ENCODE measurements at regions of chr16 and their contacts with region 1.

Region 1: DNA sequence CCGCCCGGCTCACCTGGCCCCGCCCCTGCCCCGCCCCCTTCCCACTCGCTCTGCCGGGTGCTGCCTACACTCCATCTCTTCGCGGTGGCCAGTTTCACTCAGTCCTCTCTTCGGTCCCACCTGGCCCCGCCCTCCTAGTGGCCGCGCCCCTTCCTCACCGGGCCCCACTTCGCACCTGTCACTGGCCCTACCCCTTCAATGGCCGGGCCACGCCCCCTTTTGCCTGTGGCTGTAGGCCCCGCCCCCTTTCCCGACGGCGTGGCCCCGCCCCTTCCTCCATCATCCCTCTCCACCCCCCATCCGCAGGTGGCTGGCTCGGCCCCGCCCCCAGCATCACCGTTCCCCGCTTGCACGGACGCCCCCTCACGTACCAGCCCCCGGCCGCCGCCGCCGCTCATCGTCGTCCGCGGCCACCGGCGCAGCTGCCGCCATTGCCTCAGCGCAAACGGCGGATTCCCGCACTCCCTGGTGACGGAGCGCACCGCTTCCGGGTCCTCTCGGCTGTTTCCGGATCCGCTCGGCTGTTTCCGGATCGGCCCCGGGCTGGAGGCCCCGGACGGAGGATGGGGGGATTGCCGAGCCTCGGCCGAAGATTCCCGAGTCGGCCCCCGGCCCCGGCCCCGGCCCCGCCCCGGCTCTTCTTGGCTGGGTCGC is at the start of gene RABEP2:
- DNase-seq: peak; percentile 99
- ATAC-seq: peak; percentile 64
- H3K4me3 Mint-ChIP-seq: peak within 1 kb of the TSS; percentile 90
- H3K27ac Mint-ChIP-seq: peak within 1 kb of the TSS; percentile 96
- H3K4me1 Mint-ChIP-seq: peaks cover 54% of the 10 kb centered on the region
- H3K27me3 Mint-ChIP-seq: no peaks in the 10 kb centered on the region
- CTCF ChIP-seq: no peak
- total RNA-seq, gene RABEP2: 93.5 and 110 TPM in 2 replicates

Region 2: GRCh38 chr16:28136751-28137434 is 788.0 kb before region 1 on chr16:
- CTCF ChIA-PET with region 1: no interaction called
- POLR2A ChIA-PET with region 1: no interaction called
- intact Hi-C with region 1: no loop called
- DNase-seq: no peak
- ATAC-seq: no peak
- H3K4me3 Mint-ChIP-seq: no peak overlapping the region
- H3K27ac Mint-ChIP-seq: peak overlapping the region; percentile 59
- H3K4me1 Mint-ChIP-seq: peaks cover 53% of the 10 kb centered on the region
- H3K27me3 Mint-ChIP-seq: no peaks in the 10 kb centered on the region
- CTCF ChIP-seq: no peak

Region 3: DNA sequence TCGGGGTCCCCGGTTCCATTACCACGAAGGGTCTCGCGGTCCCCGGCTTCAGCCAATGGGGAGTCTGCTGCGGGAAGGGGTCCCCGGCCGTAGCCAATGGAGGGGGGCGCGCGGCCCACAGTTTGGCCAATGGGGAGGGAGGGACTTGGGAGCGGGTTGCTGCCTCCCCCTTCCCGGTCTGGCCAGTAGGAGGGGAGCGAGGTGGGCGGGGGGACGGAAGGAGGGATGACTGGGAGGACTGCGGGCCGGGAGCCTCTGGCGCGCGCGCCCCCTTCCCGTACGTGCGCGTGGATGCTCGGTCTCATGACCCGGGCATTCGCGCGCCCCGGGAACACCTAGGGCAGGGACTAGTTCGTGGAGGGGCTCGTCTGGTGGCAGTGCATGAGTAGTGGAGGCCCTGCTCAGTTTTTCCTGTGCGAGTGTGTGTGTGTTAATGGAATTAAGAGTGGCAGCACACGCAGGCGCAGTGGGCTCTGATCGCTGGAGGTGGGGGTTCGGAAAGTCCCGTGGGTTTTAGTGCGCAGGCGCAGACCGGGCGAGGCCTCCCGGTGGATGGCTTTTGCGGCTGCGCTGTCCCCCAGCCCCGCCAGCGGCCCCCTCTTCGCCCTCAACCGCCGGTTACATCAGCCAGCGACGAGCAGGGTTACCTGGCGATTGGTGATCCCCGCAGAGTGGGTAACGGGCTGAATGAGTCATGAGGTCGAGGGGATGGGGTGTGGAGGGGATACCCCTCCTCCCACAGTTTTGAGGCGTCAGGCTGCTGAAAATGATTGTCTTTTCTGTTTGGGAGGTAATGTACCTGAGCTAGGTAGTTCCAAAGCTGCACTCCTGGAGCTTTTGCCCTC is 100.8 kb before region 1 on chr16:
- CTCF ChIA-PET with region 1: interaction called, 4 read pairs
- POLR2A ChIA-PET with region 1: interaction called, 49 read pairs
- intact Hi-C with region 1: loop called (anchors 1 kb)
- DNase-seq: peak; percentile 92
- ATAC-seq: peak; percentile 77
- H3K4me3 Mint-ChIP-seq: peak overlapping the region; percentile 98
- H3K27ac Mint-ChIP-seq: peak overlapping the region; percentile 99
- H3K4me1 Mint-ChIP-seq: peaks cover 43% of the 10 kb centered on the region
- H3K27me3 Mint-ChIP-seq: no peaks in the 10 kb centered on the region
- CTCF ChIP-seq: no peak

Region 4: GRCh38 chr16:28873536-28874201 is 51.2 kb before region 1 on chr16:
- CTCF ChIA-PET with region 1: interaction called, 10 read pairs
- POLR2A ChIA-PET with region 1: interaction called, 22 read pairs
- intact Hi-C with region 1: loop called (anchors 2 kb)
- DNase-seq: peak; percentile 53
- ATAC-seq: peak; percentile 92
- H3K4me3 Mint-ChIP-seq: no peak overlapping the region
- H3K27ac Mint-ChIP-seq: no peak overlapping the region
- H3K4me1 Mint-ChIP-seq: peaks cover 2% of the 10 kb centered on the region
- H3K27me3 Mint-ChIP-seq: no peaks in the 10 kb centered on the region
- CTCF ChIP-seq: no peak

Region 5: DNA sequence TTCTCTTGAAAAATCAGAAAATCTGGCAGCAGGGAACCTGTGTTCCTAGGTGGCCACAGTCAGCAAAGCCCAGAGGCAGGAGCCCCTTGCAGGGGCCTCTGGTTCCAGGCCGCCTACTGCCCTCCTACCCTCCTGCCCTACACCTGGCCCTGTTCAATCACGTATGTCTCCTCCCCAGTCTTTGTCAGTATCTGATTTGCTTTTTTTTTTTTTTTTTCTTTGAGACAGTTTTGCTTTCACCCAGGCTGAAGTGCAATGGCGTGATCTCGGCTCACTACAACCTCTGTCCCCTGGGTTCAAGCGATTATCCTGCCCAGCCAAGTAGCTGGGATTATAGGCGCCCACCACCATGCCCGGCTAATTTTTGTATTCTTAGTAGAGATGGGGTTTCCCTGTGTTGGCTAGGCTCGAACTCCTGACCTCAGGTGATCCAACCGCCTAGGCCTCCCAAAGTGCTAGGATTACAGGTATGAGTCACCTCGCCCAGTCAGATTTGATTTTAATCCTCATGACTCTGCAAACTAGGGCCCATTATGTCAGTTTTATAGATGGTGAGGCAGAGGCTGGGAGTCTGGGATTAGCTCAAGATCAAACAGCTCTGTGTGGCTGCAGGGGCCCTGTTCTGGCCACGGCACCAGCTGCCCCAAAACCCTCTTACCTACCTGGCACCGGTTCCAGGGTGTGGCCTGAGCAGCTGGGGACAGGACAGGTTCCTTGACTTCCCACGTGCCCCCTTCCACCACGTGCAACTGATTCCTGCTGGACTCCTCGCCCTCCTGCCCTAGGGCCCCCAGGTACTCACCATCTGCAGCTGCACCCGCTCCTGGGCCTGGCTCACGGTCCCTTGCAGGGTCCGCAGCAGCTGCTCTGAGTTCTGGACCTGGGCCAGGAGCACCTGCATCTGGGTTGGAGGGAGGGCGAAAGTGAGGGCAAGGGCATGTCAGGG is 14.5 kb before region 1 on chr16:
- CTCF ChIA-PET with region 1: interaction called, 4 read pairs
- POLR2A ChIA-PET with region 1: interaction called, 54 read pairs
- intact Hi-C with region 1: loop called (anchors 1 kb)
- DNase-seq: no peak
- ATAC-seq: peak; percentile 73
- H3K4me3 Mint-ChIP-seq: peak overlapping the region; percentile 7
- H3K27ac Mint-ChIP-seq: peak overlapping the region; percentile 87
- H3K4me1 Mint-ChIP-seq: peaks cover 12% of the 10 kb centered on the region
- H3K27me3 Mint-ChIP-seq: no peaks in the 10 kb centered on the region
- CTCF ChIP-seq: no peak

Region 6: DNA sequence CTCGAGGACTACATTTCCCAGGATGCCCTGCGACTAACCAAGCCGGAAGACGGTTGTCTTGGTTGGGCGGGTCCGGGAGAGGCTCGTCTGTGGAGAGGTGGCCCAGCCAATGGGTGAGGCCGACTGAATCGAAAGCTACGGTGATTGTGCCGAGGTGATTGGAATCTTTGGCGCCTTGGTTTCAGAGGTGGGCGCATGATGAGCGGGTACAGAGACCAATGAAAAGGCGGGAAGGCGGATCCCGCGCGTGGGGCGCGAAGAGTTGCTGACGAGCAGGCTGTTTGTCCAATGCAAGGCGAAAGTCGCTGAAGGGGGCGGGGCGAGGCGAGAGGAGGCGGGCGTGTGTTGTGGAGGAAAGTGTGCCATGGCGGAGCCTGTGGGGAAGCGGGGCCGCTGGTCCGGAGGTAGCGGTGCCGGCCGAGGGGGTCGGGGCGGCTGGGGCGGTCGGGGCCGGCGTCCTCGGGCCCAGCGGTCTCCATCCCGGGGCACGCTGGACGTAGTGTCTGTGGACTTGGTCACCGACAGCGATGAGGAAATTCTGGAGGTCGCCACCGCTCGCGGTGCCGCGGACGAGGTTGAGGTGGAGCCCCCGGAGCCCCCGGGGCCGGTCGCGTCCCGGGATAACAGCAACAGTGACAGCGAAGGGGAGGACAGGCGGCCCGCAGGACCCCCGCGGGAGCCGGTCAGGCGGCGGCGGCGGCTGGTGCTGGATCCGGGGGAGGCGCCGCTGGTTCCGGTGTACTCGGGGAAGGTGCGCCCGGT is 26.0 kb after region 1 on chr16 and contains the start of gene NFATC2IP:
- CTCF ChIA-PET with region 1: interaction called, 51 read pairs
- POLR2A ChIA-PET with region 1: interaction called, 29 read pairs
- intact Hi-C with region 1: loop called (anchors 1 kb)
- DNase-seq: peak; percentile 98
- ATAC-seq: peak; percentile 95
- H3K4me3 Mint-ChIP-seq: peak within 1 kb of the TSS; percentile 91
- H3K27ac Mint-ChIP-seq: peak within 1 kb of the TSS; percentile 81
- H3K4me1 Mint-ChIP-seq: peaks cover 25% of the 10 kb centered on the region
- H3K27me3 Mint-ChIP-seq: no peaks in the 10 kb centered on the region
- CTCF ChIP-seq: no peak
- total RNA-seq, gene NFATC2IP: 62.9 and 85.7 TPM in 2 replicates

Region 7: DNA sequence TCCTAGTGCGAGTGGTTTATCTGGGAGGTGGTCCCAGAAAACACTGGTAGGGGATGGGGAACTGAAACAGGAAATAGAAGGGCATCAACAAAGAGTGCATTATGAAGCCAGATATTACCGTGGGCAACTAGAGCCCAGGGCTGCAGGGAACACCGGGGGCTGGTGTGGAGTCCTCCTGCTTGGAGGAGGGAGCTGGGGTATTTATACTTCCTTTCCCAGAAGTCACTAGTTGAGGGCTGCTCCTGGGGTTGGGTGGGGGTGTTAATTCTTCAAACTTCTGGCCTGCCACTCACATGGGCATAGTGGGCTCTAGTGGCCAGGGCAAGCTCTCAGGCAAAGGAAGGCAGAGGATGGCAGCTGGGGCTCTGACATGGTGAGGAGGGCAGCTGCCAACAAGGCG is 74.7 kb after region 1 on chr16:
- CTCF ChIA-PET with region 1: no interaction called
- POLR2A ChIA-PET with region 1: no interaction called
- intact Hi-C with region 1: no loop called
- DNase-seq: no peak
- ATAC-seq: no peak
- H3K4me3 Mint-ChIP-seq: no peak overlapping the region
- H3K27ac Mint-ChIP-seq: no peak overlapping the region
- H3K4me1 Mint-ChIP-seq: peaks cover 9% of the 10 kb centered on the region
- H3K27me3 Mint-ChIP-seq: no peaks in the 10 kb centered on the region
- CTCF ChIP-seq: no peak

Region 8: DNA sequence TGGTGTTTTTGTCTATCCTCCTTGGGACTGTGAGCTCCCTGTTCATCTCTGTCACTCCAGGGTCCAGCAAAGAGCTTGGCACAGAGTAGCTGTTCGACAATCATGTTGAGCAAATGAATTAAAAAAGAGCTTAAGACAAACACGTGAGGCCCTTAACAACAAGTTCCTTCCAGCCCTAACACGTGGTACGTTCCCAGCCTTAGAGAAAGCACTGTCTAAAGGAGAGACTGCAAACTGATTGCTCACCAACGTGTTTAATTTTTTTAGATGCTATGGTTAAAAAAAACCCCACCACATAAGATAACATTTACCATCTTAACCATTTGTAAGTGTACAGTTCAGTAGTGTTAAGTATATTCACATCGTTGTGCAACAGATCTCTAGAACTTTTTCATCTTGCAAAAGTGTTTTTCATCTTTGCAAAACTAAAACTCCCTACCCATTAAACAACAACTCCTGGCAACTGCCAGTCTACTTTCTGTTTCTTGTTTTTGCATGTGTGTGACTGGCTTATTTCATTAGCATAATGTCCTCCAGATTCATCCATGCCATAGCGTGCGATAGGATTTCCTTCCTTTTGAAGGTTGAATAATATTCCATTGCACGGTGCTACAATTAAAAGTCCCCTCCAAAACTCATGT is 88.2 kb after region 1 on chr16:
- CTCF ChIA-PET with region 1: no interaction called
- POLR2A ChIA-PET with region 1: no interaction called
- intact Hi-C with region 1: no loop called
- DNase-seq: no peak
- ATAC-seq: no peak
- H3K4me3 Mint-ChIP-seq: no peak overlapping the region
- H3K27ac Mint-ChIP-seq: no peak overlapping the region
- H3K4me1 Mint-ChIP-seq: peaks cover 2% of the 10 kb centered on the region
- H3K27me3 Mint-ChIP-seq: peaks cover 7% of the 10 kb centered on the region
- CTCF ChIP-seq: no peak

Measured in activated B cell treated with CpG ODN at 0.5 μM for 24 hours (primary cell).